CD14-positive monocyte (primary cell): ENCODE measurements at regions of chr5 and their contacts with region 1.

Region 1: GRCh38 chr5:1503241-1504068 is 20.3 kb downstream of the LPCAT1 start:
- DNase-seq: peak; percentile 92 to 94 (median 94)
- H3K4me3 ChIP-seq: peak overlapping the region in 2 of 3 experiments; percentile 2 to 46
- H3K4me3 Mint-ChIP-seq: peak overlapping the region; percentile 70 to 88
- H3K27ac ChIP-seq: peak overlapping the region; percentile 94 to 96
- H3K27ac Mint-ChIP-seq: peak overlapping the region; percentile 99 to 100 (median 100)
- H3K4me1 ChIP-seq: peaks cover 84 to 96% of the 10 kb centered on the region in 2 donors
- H3K4me1 Mint-ChIP-seq: peaks cover 89% of the 10 kb centered on the region
- H3K27me3 ChIP-seq: no peaks in the 10 kb centered on the region
- H3K27me3 Mint-ChIP-seq: peaks cover 0 to 5% (median 0%) of the 10 kb centered on the region in 3 donors
- CTCF ChIP-seq: no peak

Region 2: GRCh38 chr5:1409381-1410110 is 93.9 kb before region 1 on chr5:
- intact Hi-C with region 1: no loop called
- DNase-seq: no peak
- H3K4me3 ChIP-seq: no peak overlapping the region
- H3K4me3 Mint-ChIP-seq: no peak overlapping the region
- H3K27ac ChIP-seq: no peak overlapping the region
- H3K27ac Mint-ChIP-seq: no peak overlapping the region
- H3K4me1 ChIP-seq: no peaks in the 10 kb centered on the region
- H3K4me1 Mint-ChIP-seq: no peaks in the 10 kb centered on the region
- H3K27me3 ChIP-seq: no peaks in the 10 kb centered on the region
- H3K27me3 Mint-ChIP-seq: peaks cover 7 to 12% (median 9%) of the 10 kb centered on the region in 3 donors
- CTCF ChIP-seq: no peak

Region 3: DNA sequence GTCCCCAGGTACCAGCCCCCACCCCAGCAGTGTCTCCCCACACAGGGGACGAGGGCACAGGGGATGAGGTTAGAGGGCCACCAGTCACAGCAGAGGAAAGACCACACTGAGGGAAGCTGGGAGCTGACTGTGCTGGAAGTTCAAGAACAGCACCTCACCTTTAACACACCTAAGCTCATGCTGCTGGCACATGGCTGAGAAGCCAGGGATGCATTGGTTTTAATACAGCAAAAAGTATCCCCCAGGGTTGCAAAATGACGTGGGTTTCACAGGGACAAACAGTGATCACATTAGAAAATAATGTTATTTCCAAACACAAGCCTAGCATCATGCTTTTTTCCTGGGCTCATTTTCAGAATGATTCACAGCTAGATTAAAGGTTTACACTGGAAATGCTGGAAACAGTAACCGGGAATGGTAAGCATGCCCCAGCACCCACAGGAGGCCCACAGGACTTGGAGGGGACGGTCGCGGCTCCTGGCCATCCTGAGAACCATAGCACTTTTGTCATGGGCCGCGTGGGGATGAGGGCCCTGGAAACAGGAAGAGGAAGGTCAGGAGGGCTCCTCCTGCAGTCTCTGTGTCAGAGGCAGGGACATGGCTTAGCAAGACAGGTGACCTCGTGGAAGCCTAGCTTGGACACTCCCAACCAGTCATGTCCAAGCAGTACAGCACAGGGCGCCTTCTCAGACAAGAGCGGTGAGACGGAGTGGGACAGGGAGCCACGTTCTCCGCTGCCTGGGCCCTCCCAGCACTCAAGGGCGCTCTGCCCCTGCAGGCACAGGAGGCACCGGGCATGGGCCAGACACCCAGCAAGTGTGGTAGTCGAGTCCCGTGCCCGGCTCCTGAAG is 13.5 kb after region 1 on chr5:
- intact Hi-C with region 1: loop called in 1 of 2 experiments (anchors 2 kb)
- DNase-seq: peak; percentile 39 to 68 (median 58)
- H3K4me3 ChIP-seq: no peak overlapping the region
- H3K4me3 Mint-ChIP-seq: peak overlapping the region; percentile 16 to 62
- H3K27ac ChIP-seq: peak overlapping the region; percentile 81 to 86
- H3K27ac Mint-ChIP-seq: peak overlapping the region; percentile 86 to 97 (median 91)
- H3K4me1 ChIP-seq: peaks cover 48 to 56% of the 10 kb centered on the region in 2 donors
- H3K4me1 Mint-ChIP-seq: peaks cover 60% of the 10 kb centered on the region
- H3K27me3 ChIP-seq: no peaks in the 10 kb centered on the region
- H3K27me3 Mint-ChIP-seq: peaks cover 0 to 4% (median 0%) of the 10 kb centered on the region in 3 donors
- CTCF ChIP-seq: no peak